Activated CD4-positive, alpha-beta T cell treated with anti-CD3 and anti-CD28 coated beads, Interleukin-2, amount 10 ng/mL, durations not matched to agents 24 days and 14 days (primary cell): ENCODE measurements at regions of chr7 and their contacts with region 1.

Region 1: DNA sequence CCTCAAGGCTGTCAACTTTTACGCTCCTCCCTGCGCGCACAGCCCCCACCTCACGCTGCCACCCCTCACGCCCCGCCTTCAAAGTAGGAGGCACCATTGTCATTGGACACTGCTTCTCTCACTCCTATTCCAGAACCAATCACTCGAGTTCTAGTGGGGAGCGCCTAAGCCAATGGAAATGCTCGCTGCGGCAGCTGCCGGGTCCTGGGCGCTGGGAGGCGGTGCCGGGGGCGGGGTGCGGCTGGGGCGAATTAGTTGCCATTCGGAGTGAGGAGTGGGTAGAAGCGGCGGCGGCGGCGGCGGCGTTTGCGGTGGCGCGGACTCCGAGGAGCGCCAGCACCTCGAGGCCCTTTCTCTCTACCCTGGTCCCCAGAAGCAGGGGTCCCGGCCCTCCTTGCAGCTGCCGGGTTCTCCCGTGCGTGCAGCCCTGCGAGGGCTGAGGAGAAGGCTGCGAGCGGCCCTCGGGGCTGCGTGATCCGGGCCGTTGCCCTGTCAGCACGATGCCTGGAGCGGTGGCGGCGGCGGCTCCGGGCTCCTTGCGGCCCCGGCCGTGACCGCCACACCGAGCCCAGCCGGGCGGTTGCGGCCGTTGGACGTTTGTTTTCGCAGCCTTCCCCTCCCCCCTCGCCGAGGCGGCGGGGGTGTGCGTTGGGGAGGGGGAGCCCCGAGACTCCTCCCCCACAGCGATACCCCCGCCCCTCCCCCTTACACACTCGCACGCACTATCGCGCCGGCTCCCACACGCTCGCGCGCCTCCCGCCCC is at the start of gene GLCCI1:
- DNase-seq: peak; percentile 99
- H3K4me3 Mint-ChIP-seq: peak within 1 kb of the TSS; percentile 86
- H3K27ac Mint-ChIP-seq: peak within 1 kb of the TSS; percentile 89
- H3K4me1 Mint-ChIP-seq: peaks cover 16% of the 10 kb centered on the region
- H3K27me3 Mint-ChIP-seq: no peaks in the 10 kb centered on the region
- total RNA-seq, gene GLCCI1: 10.1 and 10.9 TPM in 2 replicates

Region 2: DNA sequence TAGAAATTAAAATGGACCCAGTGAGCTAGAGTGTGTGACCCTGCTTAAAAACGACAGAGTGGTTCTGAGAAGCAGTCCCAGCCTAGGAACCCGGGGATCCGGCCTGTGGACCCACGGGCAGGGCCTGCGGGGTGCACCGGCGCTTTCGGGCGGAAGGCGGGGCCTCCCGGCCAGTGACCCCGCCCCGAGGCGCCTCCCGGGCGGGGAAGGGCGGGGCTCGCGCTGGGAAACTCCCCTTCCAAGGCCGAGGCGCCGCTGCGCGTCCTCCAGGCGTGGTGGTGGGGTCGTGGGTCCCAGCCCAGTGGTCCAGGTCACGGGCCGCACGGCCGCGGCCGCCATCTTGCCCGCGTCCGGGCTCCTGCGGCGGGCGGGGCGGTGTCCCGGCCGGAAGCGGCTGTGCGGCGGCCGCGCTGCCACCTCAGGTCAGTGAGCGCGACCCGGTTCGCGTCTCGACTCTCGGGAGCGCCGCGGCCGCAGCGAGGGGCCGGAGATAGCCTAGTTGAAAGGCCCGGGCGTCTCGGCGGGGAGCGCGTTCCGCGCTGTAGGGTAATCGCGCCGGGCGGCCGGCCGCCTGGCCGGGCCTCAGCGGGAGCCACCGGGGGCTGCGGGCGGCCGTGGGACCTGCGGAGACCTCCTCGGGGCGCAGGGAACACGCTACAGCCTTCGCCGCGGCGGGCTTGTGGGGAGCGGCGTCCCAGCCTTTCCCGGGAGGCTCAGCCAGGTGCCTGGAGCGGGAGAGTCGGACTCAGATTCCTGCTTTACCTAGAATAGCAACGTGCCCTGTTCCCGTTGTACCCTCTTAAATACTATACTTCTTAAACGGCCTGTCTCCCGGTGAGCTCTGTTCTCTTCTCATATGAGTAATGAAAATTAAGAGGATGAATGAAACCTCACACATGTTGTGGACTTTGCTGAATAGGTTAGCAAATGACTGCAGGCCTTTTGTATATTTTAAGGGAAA is 401.8 kb before region 1 on chr7 and contains the start of gene MIOS:
- intact Hi-C with region 1: loop called (anchors 5 kb)
- DNase-seq: peak; percentile 96
- H3K4me3 Mint-ChIP-seq: peak within 1 kb of the TSS; percentile 84
- H3K27ac Mint-ChIP-seq: peak within 1 kb of the TSS; percentile 79
- H3K4me1 Mint-ChIP-seq: peaks cover 23% of the 10 kb centered on the region
- H3K27me3 Mint-ChIP-seq: no peaks in the 10 kb centered on the region
- total RNA-seq, gene MIOS: 33.3 and 34.7 TPM in 2 replicates

Region 3: DNA sequence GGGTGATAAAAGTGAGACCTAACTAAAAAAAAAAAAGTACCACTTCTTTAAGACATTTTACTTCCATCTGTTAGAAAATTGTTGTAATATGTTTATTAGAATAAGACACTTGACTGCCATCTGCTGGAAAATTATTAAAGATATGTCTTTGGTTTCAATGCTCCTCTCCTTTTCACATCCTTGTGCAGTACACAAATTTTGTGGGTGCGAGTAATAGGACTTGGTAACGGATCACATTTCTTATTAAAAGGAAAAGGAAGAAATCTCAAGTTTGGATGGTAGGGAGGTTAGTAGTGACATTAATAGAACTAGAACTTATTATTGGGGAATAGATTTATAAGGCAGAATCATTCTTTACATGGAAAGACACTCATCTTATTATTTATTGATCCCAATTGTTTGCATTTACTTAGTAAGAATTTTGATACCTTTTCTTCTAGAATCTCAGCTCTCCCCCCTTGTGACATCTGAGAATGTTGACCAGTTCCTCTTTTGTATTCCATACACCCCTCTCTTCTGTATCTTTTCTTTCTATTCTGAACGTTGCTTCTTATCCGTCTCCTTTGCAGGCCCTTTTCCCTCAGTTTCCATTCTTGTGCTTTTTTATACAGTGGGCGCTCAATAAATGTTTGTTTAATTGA is 207.3 kb before region 1 on chr7:
- intact Hi-C with region 1: loop called (anchors 2 kb)
- DNase-seq: peak; percentile 59
- H3K4me3 Mint-ChIP-seq: peak overlapping the region; percentile 92
- H3K27ac Mint-ChIP-seq: peak overlapping the region; percentile 88
- H3K4me1 Mint-ChIP-seq: peaks cover 30% of the 10 kb centered on the region
- H3K27me3 Mint-ChIP-seq: no peaks in the 10 kb centered on the region

Region 4: GRCh38 chr7:8035647-8036518 is 67.2 kb after region 1 on chr7:
- intact Hi-C with region 1: loop called (anchors 5 kb)
- DNase-seq: peak; percentile 60
- H3K4me3 Mint-ChIP-seq: no peak overlapping the region
- H3K27ac Mint-ChIP-seq: no peak overlapping the region
- H3K4me1 Mint-ChIP-seq: peaks cover 10% of the 10 kb centered on the region
- H3K27me3 Mint-ChIP-seq: no peaks in the 10 kb centered on the region

Region 5: DNA sequence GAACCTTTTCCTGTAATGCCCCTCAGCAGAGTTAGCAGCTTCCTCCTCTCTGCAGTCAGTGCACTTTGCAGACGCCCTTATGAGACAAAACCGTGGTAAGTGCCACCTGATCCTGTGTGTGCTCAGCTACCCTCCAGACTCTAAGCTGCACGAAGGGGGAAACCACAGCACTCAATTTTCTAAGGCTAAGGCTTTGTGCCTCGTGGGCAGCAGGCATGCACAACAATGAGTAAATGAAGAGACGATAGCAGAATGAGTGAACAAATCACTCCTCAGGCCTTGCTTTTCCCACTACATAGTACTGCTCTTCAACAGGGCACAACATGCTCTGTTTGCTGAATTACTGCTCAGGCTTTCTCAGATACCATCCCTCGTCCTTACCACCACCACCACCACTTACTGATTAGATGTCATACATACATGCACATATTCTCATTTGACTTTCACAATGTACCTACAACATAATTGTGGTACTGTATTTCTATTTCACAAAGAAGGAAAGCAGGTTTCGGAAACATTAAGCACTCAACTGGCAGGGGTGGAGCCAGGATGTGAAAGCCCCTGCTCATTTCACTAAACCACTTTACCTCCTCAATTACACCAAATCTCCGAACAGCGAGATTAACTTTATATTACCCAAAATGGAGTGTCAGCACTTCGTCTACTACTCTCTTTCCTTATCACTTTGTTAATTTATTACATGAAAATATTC is 207.8 kb after region 1 on chr7:
- intact Hi-C with region 1: loop called (anchors 1 kb)
- DNase-seq: peak; percentile 89
- H3K4me3 Mint-ChIP-seq: peak overlapping the region; percentile 78
- H3K27ac Mint-ChIP-seq: peak overlapping the region; percentile 93
- H3K4me1 Mint-ChIP-seq: peaks cover 40% of the 10 kb centered on the region
- H3K27me3 Mint-ChIP-seq: no peaks in the 10 kb centered on the region